CD8-positive, alpha-beta T cell (primary cell): ENCODE measurements at regions of chr17 and their contacts with region 1.

Region 1: GRCh38 chr17:63621766-63622519 is at the start of gene MAP3K3:
- DNase-seq: peak; percentile 93 to 99 (median 96)
- ATAC-seq: peak; percentile 90
- H3K4me3 ChIP-seq: peak within 1 kb of the TSS; percentile 78 to 79
- H3K4me3 Mint-ChIP-seq: peak within 1 kb of the TSS; percentile 98
- H3K27ac ChIP-seq: peak within 1 kb of the TSS; percentile 58 to 81
- H3K27ac Mint-ChIP-seq: peak within 1 kb of the TSS; percentile 93
- H3K4me1 ChIP-seq: peaks cover 30% of the 10 kb centered on the region
- H3K4me1 Mint-ChIP-seq: peaks cover 39% of the 10 kb centered on the region
- H3K27me3 ChIP-seq: no peaks in the 10 kb centered on the region
- H3K27me3 Mint-ChIP-seq: no peaks in the 10 kb centered on the region
- CTCF ChIP-seq: no peak
- total RNA-seq, gene MAP3K3: 72.9 to 74.5 TPM

Region 2: DNA sequence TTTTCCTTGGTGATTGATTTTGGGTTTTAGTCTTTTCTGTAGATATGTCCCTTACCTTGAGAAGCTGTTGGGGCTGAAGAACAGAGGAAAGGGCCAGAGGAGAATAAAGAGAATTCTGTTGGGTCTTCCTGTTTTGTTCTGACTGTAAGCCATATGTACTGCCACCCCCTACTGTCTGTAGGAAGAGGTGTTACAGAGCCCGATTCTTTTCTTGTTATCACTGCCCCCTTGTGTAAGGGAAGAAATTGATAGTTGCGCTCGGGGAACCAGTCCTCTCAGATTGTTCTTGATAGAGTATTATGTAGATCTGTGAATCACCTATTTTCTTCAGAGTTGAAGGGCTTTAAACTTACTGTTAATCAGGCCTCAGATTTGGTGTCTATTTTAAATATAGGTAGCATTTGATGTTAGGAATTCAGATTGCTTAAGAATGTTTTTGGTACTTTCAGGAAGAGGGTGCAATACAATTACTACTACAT is 653.5 kb before region 1 on chr17:
- CTCF ChIA-PET with region 1: no interaction called
- POLR2A ChIA-PET with region 1: no interaction called
- intact Hi-C with region 1: loop called in 1 of 2 experiments (anchors 10 kb)
- DNase-seq: peak in 8 of 9 experiments; percentile 6 to 87 (median 54)
- ATAC-seq: peak; percentile 39
- H3K4me3 ChIP-seq: no peak overlapping the region
- H3K4me3 Mint-ChIP-seq: peak overlapping the region; percentile 40
- H3K27ac ChIP-seq: no peak overlapping the region
- H3K27ac Mint-ChIP-seq: peak overlapping the region; percentile 3
- H3K4me1 ChIP-seq: peaks cover 23% of the 10 kb centered on the region
- H3K4me1 Mint-ChIP-seq: peaks cover 36% of the 10 kb centered on the region
- H3K27me3 ChIP-seq: no peaks in the 10 kb centered on the region
- H3K27me3 Mint-ChIP-seq: no peaks in the 10 kb centered on the region
- CTCF ChIP-seq: peak; percentile 93

Region 3: DNA sequence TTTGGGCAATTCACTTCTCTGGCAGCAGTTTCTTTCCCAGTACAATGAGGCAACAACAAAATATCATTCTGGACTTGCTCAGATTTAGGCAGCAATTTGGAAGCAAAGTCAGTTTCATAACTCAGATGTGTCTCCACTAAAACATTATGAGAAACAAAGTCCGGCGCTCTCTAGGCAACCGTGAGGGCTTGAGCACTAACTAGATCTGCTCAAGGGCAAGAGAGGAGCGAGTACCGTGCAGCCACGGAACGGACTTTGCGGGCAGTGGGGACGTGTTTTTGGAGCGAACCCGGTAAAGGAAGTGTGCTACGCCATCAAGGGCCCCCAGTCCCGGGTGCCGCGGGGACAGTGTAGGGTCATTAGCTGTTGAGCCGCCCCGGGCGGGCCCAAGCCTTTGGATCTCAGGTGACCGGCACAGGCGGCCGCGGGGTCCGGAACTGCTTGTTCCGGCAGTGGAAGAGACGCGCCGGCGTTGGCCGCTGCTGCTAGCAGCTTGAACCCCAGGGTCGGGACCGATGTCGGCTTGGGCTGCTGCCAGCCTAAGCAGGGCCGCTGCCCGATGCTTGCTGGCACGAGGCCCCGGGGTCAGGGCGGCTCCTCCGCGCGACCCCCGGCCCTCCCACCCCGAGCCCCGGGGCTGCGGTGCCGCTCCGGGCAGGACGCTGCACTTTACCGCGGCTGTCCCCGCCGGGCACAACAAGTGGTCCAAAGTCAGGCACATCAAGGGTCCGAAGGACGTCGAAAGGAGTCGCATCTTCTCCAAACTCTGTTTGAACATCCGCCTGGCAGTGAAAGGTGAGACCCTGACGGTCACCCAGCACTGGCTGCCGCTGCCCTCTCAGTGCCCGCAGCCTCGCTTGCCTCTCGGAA is 21.1 kb before region 1 on chr17 and contains the start of gene TACO1:
- CTCF ChIA-PET with region 1: interaction called, 5 read pairs
- POLR2A ChIA-PET with region 1: interaction called, 5 read pairs
- intact Hi-C with region 1: loop called in 1 of 2 experiments (anchors 2 kb)
- DNase-seq: peak; percentile 62 to 87 (median 76)
- ATAC-seq: peak; percentile 82
- H3K4me3 ChIP-seq: peak within 1 kb of the TSS; percentile 69 to 99
- H3K4me3 Mint-ChIP-seq: peak within 1 kb of the TSS; percentile 96
- H3K27ac ChIP-seq: peak within 1 kb of the TSS; percentile 64 to 80
- H3K27ac Mint-ChIP-seq: peak within 1 kb of the TSS; percentile 95
- H3K4me1 ChIP-seq: peaks cover 22% of the 10 kb centered on the region
- H3K4me1 Mint-ChIP-seq: peaks cover 49% of the 10 kb centered on the region
- H3K27me3 ChIP-seq: no peaks in the 10 kb centered on the region
- H3K27me3 Mint-ChIP-seq: no peaks in the 10 kb centered on the region
- CTCF ChIP-seq: no peak
- total RNA-seq, gene TACO1: 13.7 to 15.9 TPM

Region 4: DNA sequence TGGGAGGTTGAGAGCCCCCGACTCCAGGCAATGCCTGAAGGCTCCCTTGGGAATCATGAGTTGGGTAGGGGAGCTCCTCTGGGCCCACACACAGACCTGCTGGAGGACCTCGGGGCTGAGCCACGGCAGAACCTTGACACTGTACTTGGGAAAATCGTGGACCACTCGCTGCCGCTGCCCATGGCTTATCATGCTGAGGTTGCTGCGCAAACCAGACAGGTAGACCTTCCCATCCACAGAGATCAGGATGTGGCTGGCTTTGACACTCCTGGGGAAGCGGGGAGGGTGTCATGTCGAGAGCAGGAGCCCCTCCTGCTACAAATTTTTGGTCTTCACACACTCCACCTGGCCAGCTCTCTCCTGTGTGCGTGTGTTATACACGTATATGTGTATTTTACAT is 85.2 kb after region 1 on chr17:
- CTCF ChIA-PET with region 1: interaction called, 11 read pairs
- POLR2A ChIA-PET with region 1: interaction called, 15 read pairs
- intact Hi-C with region 1: loop called (anchors 1 to 5 kb)
- DNase-seq: peak in 6 of 9 experiments; percentile 36 to 76 (median 64)
- ATAC-seq: peak; percentile 58
- H3K4me3 ChIP-seq: peak overlapping the region; percentile 10 to 42
- H3K4me3 Mint-ChIP-seq: peak overlapping the region; percentile 78
- H3K27ac ChIP-seq: peak overlapping the region; percentile 67 to 73
- H3K27ac Mint-ChIP-seq: peak overlapping the region; percentile 94
- H3K4me1 ChIP-seq: peaks cover 85% of the 10 kb centered on the region
- H3K4me1 Mint-ChIP-seq: peaks cover 83% of the 10 kb centered on the region
- H3K27me3 ChIP-seq: no peaks in the 10 kb centered on the region
- H3K27me3 Mint-ChIP-seq: no peaks in the 10 kb centered on the region
- CTCF ChIP-seq: no peak

Region 5: GRCh38 chr17:63741221-63742049 is 119.5 kb after region 1 on chr17 and contains the start of gene STRADA:
- CTCF ChIA-PET with region 1: interaction called, 3 read pairs
- POLR2A ChIA-PET with region 1: no interaction called
- intact Hi-C with region 1: loop called in 1 of 2 experiments (anchors 1 kb)
- DNase-seq: peak; percentile 97 to 100 (median 99)
- ATAC-seq: peak; percentile 92
- H3K4me3 ChIP-seq: peak within 1 kb of the TSS; percentile 58 to 86
- H3K4me3 Mint-ChIP-seq: peak within 1 kb of the TSS; percentile 88
- H3K27ac ChIP-seq: peak within 1 kb of the TSS; percentile 81 to 91
- H3K27ac Mint-ChIP-seq: peak within 1 kb of the TSS; percentile 94
- H3K4me1 ChIP-seq: peaks cover 14% of the 10 kb centered on the region
- H3K4me1 Mint-ChIP-seq: peaks cover 27% of the 10 kb centered on the region
- H3K27me3 ChIP-seq: no peaks in the 10 kb centered on the region
- H3K27me3 Mint-ChIP-seq: no peaks in the 10 kb centered on the region
- CTCF ChIP-seq: no peak
- total RNA-seq, gene STRADA: 54.7 to 63.6 TPM

Region 6: DNA sequence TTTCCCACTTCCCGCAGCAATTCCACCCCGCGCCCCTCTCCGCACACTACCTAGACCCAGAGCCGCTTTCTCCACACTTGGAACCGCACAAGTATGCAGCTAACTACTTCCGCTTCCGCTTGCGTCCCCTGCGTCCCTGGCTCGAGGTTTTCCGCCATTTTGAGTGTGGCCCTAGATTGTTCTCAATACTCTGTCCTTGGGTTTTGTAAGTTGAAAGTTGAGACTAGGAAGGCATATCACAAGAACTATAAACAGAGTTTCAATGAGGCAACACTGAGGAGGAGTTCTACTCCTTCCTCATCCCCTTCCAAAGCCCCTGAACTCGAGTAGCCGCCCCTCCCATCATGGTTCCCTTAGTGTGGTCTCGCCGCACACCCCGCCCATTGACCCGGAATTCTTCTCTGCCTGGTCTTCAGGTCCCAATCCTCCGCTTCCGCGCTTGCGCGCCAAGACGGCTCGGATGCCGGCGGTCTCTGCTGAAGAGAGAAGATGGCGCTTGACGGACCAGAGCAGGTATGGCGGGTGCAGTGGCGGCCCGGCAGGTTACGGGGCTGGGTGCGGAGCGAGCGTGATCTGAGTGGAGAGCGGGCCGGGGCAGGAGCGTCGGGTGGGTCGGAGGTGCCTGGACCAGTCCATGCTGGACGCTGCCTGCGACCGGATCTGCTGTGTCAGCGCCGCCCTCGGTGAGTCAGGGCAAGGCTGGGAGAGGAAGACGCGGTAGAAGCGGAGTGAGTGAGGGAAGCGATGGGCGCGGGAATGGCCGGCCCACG is 205.2 kb after region 1 on chr17 and contains the starts of genes FTSJ3 and PSMC5:
- CTCF ChIA-PET with region 1: no interaction called
- POLR2A ChIA-PET with region 1: no interaction called
- intact Hi-C with region 1: loop called in 1 of 2 experiments (anchors 1 kb)
- DNase-seq: peak; percentile 91 to 99 (median 95)
- ATAC-seq: peak; percentile 92
- H3K4me3 ChIP-seq: peak within 1 kb of the TSS; percentile 74 to 75
- H3K4me3 Mint-ChIP-seq: peak within 1 kb of the TSS; percentile 100
- H3K27ac ChIP-seq: peak within 1 kb of the TSS; percentile 66 to 96
- H3K27ac Mint-ChIP-seq: peak within 1 kb of the TSS; percentile 98
- H3K4me1 ChIP-seq: peaks cover 56% of the 10 kb centered on the region
- H3K4me1 Mint-ChIP-seq: peaks cover 81% of the 10 kb centered on the region
- H3K27me3 ChIP-seq: no peaks in the 10 kb centered on the region
- H3K27me3 Mint-ChIP-seq: no peaks in the 10 kb centered on the region
- CTCF ChIP-seq: peak; percentile 51
- total RNA-seq, gene FTSJ3: 60.0 to 70.3 TPM
- total RNA-seq, gene PSMC5: 88.5 to 90.3 TPM

Region 7: GRCh38 chr17:64262417-64263260 is 640.7 kb after region 1 on chr17 and contains the start of gene TEX2:
- CTCF ChIA-PET with region 1: no interaction called
- POLR2A ChIA-PET with region 1: no interaction called
- intact Hi-C with region 1: loop called in 1 of 2 experiments (anchors 5 kb)
- DNase-seq: peak; percentile 39 to 87 (median 67)
- ATAC-seq: peak; percentile 32
- H3K4me3 ChIP-seq: peak within 1 kb of the TSS; percentile 64 to 82
- H3K4me3 Mint-ChIP-seq: peak within 1 kb of the TSS; percentile 89
- H3K27ac ChIP-seq: peak within 1 kb of the TSS; percentile 67 to 74
- H3K27ac Mint-ChIP-seq: peak within 1 kb of the TSS; percentile 93
- H3K4me1 ChIP-seq: peaks cover 21% of the 10 kb centered on the region
- H3K4me1 Mint-ChIP-seq: peaks cover 37% of the 10 kb centered on the region
- H3K27me3 ChIP-seq: no peaks in the 10 kb centered on the region
- H3K27me3 Mint-ChIP-seq: no peaks in the 10 kb centered on the region
- CTCF ChIP-seq: no peak
- total RNA-seq, gene TEX2: 4.8 to 5.6 TPM